GM10248 (cell line): ENCODE measurements at regions of chr5 and their contacts with region 1.

Region 1: DNA sequence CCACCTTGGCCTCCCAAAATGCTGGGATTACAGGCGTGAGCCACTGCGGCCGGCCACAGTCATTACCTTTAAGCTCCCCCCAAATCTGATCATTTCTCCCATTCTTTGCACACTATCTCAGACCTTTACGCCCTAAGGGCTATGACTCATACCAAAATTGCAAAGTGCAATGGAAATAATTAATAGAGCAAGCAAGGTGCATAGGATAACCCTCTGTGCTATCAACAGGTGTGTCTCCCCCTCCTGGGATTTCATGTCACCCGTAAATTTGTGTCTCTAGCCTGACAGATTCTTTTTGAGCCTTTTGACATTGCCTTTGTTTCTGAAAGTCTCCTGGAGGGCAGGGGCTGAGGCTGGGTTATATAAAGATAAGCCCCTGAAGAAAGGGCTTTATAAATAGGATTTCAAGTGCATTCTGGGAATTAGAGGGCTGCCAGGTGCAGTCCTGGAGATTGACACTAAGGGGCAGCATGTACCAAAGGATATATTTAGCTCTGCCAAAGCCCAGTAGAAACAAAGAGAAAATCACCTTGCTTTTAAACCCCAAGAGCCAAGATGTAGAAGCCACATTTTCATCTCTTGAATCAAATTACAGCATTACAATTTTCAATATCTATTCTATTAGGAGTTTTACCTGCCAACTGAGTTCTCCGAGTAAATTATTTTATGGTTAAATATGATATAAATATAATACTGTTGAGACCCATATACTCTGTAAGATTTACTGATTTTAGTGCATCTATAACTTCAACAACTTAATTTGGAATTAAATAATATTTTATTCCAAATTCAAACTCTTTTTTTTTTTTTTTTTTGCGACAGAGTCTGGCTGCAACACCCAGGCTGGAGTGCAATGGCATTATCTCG is 18.2 kb downstream of the S100Z start:
- DNase-seq: peak; percentile 67
- CTCF ChIP-seq: peak; percentile 81

Region 2: DNA sequence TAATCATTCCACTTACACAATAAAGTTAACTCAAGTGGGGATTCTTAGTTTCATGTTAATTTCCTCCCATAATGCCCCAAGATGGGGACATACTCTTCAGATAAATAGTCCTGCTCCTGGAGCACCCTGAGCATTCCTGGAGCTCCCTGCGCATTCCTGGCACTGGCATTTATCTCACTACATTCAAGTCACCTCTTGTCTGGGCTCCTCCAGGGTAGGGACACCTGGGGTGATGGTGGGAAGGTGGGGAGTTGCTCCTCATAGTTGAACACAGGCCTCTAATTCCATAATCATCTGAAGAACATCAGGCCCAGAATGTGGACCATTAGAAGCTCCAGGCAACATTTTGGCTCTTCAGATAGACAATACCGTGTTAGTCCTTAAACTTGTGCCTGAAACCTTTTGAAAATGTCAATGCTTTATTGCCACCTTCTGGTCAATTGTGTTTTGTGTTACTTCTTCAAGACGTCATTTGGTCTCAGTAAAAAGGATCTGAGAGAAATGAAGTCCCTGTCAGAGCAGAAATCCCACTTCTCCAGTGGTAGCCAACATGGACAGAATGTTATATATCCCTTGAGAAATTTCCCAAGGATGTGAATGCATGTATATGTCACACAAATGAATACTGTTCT is 148.0 kb after region 1 on chr5:
- CTCF ChIA-PET with region 1: interaction called, 31 read pairs
- POLR2A ChIA-PET with region 1: no interaction called
- DNase-seq: no peak
- CTCF ChIP-seq: peak; percentile 36

Region 3: GRCh38 chr5:77030097-77031071 is 162.3 kb after region 1 on chr5 and contains the start of gene AGGF1:
- CTCF ChIA-PET with region 1: interaction called, 3 read pairs
- POLR2A ChIA-PET with region 1: interaction called, 10 read pairs
- DNase-seq: peak; percentile 91
- CTCF ChIP-seq: no peak

Region 4: DNA sequence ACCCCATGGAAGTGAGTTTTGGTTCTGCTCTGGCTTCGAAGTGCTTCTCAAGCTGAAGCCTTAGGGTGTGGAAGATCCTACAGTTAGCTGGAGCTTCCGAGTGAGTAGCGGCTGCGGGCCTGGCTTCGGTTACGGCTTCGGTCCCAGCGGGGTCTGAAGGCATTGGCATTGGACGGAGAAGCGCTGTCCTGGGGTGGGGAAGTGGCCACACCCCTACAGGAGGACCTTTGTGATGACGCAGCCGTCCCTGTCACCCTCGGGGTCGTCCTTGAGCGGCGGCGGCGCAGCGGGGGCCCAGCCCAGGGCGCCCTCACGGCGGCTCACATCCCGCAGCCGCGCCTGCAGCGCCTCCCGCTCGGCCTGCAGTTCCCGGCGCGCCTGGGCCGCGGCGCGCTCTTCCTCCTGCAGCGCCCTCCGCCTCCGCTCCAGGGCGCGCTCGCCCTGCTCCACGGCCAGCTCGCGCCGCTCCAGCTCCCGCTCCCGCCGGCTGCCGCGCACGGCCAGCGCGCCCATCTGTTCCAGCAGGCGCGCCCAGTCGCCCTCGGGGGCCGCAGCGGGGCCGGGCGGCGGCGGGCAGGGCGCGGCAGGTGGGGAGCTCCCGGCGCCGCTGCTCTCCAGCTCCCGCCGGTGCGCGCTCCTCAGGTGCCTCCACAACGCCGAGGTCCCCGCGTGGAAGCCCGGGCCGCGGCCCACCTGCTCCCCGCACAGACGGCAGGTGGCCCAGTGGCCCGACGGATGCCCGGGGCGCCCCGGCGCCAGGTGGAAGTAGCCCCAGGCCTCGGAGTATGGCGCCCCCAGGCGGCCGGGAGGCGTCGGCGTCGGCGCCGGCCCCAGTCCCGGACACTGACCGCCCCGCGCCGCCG is 209.1 kb after region 1 on chr5:
- CTCF ChIA-PET with region 1: interaction called, 20 read pairs
- POLR2A ChIA-PET with region 1: no interaction called
- DNase-seq: peak; percentile 87
- CTCF ChIP-seq: peak; percentile 87